ENCODE measurements at regions of chr20 and their contacts with region 1.

Region 1: DNA sequence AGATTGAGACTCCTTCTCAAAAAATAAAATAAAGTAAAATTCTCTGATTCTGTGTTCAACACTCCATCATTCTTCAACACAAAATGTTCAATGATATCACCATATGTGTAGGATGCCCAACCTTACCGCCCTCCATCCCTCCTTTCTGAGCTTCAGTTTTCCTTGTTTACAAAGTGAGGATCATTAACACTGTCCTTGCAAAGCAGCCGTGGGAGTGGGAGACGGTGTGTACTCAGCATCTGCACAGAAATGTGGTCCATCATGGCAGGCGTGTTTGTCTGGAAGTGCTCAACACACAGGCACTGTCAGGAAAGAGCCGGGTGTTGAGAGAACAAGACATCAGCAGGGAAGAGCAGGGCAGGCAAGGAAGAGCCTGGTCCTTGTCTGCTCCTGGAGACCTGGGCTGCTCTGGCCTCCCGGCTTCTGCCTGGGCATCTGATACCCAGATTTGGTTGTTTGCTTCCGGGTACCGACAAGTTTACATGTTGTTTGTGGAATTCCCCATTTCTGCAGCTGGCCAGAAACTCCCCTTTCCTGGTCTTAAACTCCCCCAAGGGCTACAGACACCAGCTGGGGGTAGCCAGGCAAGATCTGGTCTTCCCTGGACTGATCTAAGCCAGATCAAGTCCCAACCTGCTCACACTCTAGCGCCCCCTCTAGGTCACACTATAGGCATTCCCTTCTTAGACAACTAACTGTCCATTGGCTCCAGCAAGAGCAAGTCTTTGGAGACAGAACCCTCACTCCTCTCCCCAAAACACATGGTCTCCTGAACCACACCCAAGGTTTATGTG is 26.7 kb upstream of the TTPAL start:
- DNase-seq: peak; percentile 29 to 80
- H3K4me3 ChIP-seq: no peak overlapping the region
- H3K27ac ChIP-seq: no peak overlapping the region
- H3K4me1 ChIP-seq: no peaks in the 10 kb centered on the region
- H3K27me3 ChIP-seq: no peaks in the 10 kb centered on the region
- CTCF ChIP-seq: peak; percentile 61 to 92 (median 78)
- EP300 ChIP-seq: no peak
- POLR2A ChIP-seq: no peak
- RAD21 ChIP-seq: peak; percentile 46 to 62

Region 2: DNA sequence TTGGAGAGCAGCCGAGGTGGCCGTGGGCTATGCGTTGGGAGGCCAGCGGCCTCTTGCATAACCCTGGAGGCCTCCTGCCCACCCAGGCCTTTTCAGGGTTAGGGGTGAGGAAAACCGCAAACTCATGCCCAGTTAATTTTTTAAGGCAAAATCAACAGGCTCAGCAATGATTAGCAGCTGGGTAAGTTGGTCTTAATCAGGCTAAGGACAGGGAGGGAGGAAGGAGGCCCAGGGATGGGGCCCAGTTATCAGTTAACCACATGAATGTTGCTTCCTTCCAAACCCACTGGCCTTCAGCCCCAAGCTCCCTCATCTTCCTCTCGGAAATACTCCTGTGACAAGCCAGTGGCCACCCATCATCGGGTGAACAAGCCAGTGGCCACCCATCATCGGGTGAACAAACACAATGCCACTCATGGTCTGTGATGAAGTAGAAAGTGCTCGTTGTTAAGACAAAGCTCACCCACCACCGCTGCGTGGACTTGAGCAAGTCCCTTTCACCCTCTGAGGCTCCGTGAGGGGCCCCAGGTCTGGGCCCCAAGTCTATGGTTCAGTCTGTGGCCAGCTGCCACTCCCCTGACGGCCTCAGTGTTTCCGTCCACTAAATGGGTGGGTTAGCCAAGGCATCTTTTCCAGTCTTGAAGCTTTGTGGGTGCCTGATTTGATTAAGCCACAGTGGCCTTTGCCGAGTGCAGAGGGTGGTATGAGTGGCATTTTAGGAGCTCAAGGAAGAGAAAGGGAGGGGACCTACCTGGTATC is 54.1 kb before region 1 on chr20:
- CTCF ChIA-PET with region 1: interaction called, 11 read pairs
- POLR2A ChIA-PET with region 1: no interaction called
- DNase-seq: no peak
- H3K4me3 ChIP-seq: no peak overlapping the region
- H3K27ac ChIP-seq: no peak overlapping the region
- H3K4me1 ChIP-seq: no peaks in the 10 kb centered on the region
- H3K27me3 ChIP-seq: no peaks in the 10 kb centered on the region
- CTCF ChIP-seq: no peak
- EP300 ChIP-seq: no peak
- POLR2A ChIP-seq: no peak
- RAD21 ChIP-seq: no peak

Region 3: GRCh38 chr20:44407402-44408184 is 41.4 kb before region 1 on chr20:
- CTCF ChIA-PET with region 1: interaction called, 10 read pairs
- POLR2A ChIA-PET with region 1: no interaction called
- DNase-seq: no peak
- H3K4me3 ChIP-seq: no peak overlapping the region
- H3K27ac ChIP-seq: no peak overlapping the region
- H3K4me1 ChIP-seq: no peaks in the 10 kb centered on the region; a peak in 2 of 7 replicates
- H3K27me3 ChIP-seq: no peaks in the 10 kb centered on the region
- CTCF ChIP-seq: no peak
- EP300 ChIP-seq: no peak
- POLR2A ChIP-seq: no peak
- RAD21 ChIP-seq: no peak

Region 4: DNA sequence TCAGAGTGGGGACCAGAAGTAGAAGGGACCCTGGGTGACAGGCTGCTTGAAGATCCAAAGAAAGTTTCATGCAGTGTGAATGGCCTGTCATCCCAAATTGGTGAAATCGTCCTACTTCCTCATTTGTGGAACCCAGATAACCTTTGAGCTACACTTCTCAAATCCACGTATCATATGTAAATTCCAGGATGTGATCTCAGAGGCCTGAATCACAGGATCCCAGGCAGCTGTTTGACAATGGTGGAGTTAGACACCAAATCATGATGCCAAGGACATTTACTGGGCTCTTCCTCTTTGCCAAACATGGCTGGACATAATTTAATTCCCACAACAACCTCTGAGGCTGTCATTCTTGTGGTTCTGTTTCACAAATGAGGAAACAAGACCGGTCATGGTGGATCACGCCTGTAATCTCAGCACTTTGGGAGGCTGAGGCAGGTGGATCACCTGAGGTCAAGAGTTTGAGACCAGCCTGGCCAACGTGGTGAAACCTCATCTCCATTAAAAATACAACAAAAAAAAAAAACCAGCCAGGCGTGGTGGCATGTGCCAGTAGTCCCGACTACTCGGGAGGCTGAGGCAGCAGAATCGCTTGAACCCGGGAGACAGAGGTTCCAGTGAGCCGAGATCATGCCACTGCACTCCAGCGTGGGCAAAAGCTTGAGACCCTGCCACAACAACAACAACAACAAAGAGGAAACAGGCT is 13.2 kb before region 1 on chr20:
- CTCF ChIA-PET with region 1: interaction called, 20 read pairs
- POLR2A ChIA-PET with region 1: no interaction called
- DNase-seq: no peak
- H3K4me3 ChIP-seq: no peak overlapping the region
- H3K27ac ChIP-seq: no peak overlapping the region
- H3K4me1 ChIP-seq: no peaks in the 10 kb centered on the region
- H3K27me3 ChIP-seq: no peaks in the 10 kb centered on the region
- CTCF ChIP-seq: no peak
- EP300 ChIP-seq: no peak
- POLR2A ChIP-seq: no peak
- RAD21 ChIP-seq: no peak

Region 5: GRCh38 chr20:44460795-44461141 is 11.8 kb after region 1 on chr20:
- CTCF ChIA-PET with region 1: interaction called, 33 read pairs
- POLR2A ChIA-PET with region 1: no interaction called
- DNase-seq: no peak
- H3K4me3 ChIP-seq: no peak overlapping the region
- H3K27ac ChIP-seq: no peak overlapping the region
- H3K4me1 ChIP-seq: no peaks in the 10 kb centered on the region
- H3K27me3 ChIP-seq: no peaks in the 10 kb centered on the region
- CTCF ChIP-seq: peak in 2 of 3 experiments; percentile 35 to 52; a peak in 2 of 4 replicates
- EP300 ChIP-seq: no peak
- POLR2A ChIP-seq: no peak
- RAD21 ChIP-seq: peak; percentile 62 to 66

Region 6: GRCh38 chr20:44471481-44471882 is 22.5 kb after region 1 on chr20:
- CTCF ChIA-PET with region 1: interaction called, 18 read pairs
- POLR2A ChIA-PET with region 1: no interaction called
- DNase-seq: no peak
- H3K4me3 ChIP-seq: no peak overlapping the region
- H3K27ac ChIP-seq: no peak overlapping the region
- H3K4me1 ChIP-seq: peaks cover 2 to 7% (median 2%) of the 10 kb centered on the region in 4 experiments; a peak in 5 of 7 replicates
- H3K27me3 ChIP-seq: no peaks in the 10 kb centered on the region; a peak in 1 of 7 replicates
- CTCF ChIP-seq: peak in 2 of 3 experiments; percentile 32 to 46; a peak in 2 of 4 replicates
- EP300 ChIP-seq: no peak
- POLR2A ChIP-seq: no peak
- RAD21 ChIP-seq: peak; percentile 67 to 68

Measured in H1 (cell line).